Testis (tissue), 5 donors: ENCODE measurements at regions of chr10 and their contacts with region 1.

Region 1: GRCh38 chr10:70815504-70816219 is at the start of gene SGPL1:
- DNase-seq: peak; percentile 92
- H3K4me3 ChIP-seq: peak within 1 kb of the TSS; percentile 84 to 86
- H3K27ac ChIP-seq: peak within 1 kb of the TSS; percentile 88 to 95
- H3K4me1 ChIP-seq: peaks cover 13% of the 10 kb centered on the region
- H3K27me3 ChIP-seq: no peaks in the 10 kb centered on the region
- CTCF ChIP-seq: peak; percentile 97 to 99 (median 99)
- POLR2A ChIP-seq: no peak
- total RNA-seq, gene SGPL1: 64.2 to 70.1 TPM

Region 2: DNA sequence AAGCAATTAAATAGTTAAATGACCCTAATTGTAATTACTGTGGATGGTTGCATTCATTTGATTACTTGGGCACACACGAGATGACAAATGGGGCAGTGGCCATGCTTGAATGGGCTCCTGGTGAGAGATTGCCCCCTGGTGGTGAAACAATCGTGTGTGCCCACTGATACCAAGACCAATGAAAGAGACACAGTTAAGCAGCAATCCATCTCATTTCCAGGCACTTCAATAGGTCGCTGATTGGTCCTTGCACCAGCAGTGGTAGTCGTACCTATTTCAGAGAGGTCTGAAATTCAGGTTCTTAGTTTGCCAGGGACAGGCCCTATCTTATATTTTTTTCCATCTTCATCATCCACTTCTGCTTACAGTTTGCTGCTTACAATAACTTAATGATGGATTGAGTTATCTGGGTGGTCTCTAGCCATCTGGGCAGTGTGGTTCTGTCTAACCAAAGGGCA is 64.4 kb after region 1 on chr10:
- intact Hi-C with region 1: loop called (anchors 5 kb)
- DNase-seq: peak; percentile 91
- H3K4me3 ChIP-seq: no peak overlapping the region
- H3K27ac ChIP-seq: no peak overlapping the region
- H3K4me1 ChIP-seq: no peaks in the 10 kb centered on the region
- H3K27me3 ChIP-seq: no peaks in the 10 kb centered on the region
- CTCF ChIP-seq: peak; percentile 92 to 96 (median 92)
- POLR2A ChIP-seq: no peak